ENCODE measurements at regions of chr12 and their contacts with region 1.

Region 1: DNA sequence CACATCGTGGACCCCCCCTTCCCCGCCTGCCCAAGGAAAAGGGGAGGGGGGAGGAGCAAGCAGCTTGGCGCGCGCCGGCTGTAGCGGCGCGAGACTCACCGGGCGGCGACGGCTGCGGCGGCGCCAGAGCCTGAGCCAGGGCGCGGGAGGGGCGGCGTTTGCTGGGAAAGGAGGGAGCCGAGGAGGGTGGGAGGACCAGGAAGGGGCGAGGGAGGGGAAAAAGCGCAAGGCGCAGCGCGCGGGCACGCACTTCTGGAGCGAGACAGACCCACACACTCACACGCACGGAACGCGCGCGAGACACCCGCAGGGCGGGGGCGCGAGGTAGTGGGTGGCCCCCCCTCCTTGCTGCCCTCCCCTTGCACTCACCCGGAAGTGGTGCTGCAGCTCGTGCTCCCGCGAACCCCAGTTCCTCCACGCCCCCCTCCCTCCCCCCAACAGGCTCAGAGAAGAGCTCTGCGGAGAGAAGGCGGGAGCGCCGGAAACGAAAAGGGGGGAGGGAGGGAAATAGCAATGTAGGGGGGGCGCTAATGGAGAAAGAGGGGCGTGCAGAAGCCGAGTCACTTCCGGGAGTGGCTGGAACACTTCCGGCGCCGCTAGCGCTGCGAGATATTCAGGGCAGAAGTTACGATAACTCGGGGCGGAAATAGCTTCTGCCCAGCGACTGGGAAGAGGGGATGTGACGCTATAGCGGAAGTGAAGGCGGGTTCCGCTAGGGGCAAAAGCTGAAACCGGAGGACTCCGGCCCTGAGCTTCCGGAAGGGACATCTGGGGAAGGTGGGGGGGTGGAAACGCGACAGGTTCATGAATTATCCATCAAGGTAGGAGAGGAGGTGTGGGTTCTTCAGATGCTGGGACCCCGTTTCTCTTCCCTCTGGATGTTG is at the start of gene ZNF384:
- DNase-seq: peak; percentile 97
- ATAC-seq: peak; percentile 83
- H3K4me3 ChIP-seq: peak within 1 kb of the TSS; percentile 80
- H3K27ac ChIP-seq: peak within 1 kb of the TSS; percentile 97
- H3K4me1 ChIP-seq: peaks cover 10% of the 10 kb centered on the region; the same call in 1 of the 2 replicates
- H3K27me3 ChIP-seq: no peaks in the 10 kb centered on the region
- CTCF ChIP-seq: 0 out of 6 replicates have a peak, but pooled peaks of 1 of the 3 experiments have one; percentile 0
- EP300 ChIP-seq: peak in 1 of 2 experiments; percentile 17; a peak in 1 of 4 replicates
- POLR2A ChIP-seq: peak; percentile 88
- RAD21 ChIP-seq: no peak
- polyA plus RNA-seq, gene ZNF384: 0.46 to 1.3 TPM

Region 2: DNA sequence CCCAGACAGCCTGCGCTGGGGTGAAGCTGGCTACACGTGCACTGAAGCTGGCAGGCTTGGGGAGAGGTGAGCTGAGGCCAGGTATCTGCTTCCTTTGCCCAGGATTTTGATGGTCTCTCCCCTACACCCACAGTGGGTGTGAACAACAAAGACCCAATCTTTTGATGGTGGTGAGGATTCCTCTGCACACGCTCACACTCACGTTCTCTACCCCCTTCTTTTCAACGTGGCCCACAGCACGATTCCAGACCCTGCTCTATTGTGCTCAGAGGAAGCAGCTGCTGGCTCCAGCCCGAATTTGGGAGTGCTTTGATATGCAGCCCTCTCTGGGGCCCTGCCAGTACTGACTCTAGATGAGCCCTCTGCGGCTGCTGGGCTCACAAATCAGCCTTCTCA is 484.1 kb before region 1 on chr12:
- CTCF ChIA-PET with region 1: no interaction called
- POLR2A ChIA-PET with region 1: no interaction called
- RAD21 ChIA-PET with region 1: no interaction called
- SMC1A ChIA-PET with region 1: no interaction called
- in situ Hi-C with region 1: no loop called
- intact Hi-C with region 1: no loop called
- DNase-seq: no peak
- ATAC-seq: no peak
- H3K4me3 ChIP-seq: no peak overlapping the region
- H3K27ac ChIP-seq: no peak overlapping the region
- H3K4me1 ChIP-seq: no peaks in the 10 kb centered on the region
- H3K27me3 ChIP-seq: peaks cover 2 to 14% of the 10 kb centered on the region in 2 experiments; a peak in 3 of 4 replicates
- CTCF ChIP-seq: no peak
- EP300 ChIP-seq: no peak
- POLR2A ChIP-seq: no peak
- RAD21 ChIP-seq: no peak

Region 3: DNA sequence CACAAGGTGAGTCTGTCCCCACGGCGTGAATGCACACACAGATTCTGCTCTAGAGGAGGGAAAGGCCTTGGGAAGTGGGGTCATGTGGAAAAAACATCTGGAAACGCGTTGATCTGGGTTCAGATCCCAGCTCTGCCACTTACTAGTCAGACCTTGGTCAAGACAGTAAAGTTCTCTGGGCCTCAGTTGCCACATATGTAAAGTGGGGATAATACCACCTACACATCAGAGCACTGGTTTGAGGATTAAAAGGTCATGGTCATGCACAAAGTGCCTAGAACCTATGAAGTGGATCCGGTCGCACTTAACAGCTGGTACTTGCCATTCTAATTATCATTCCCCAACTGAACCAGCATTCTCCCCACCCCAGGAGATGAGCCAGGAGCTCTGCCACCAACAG is 374.1 kb before region 1 on chr12:
- CTCF ChIA-PET with region 1: no interaction called
- POLR2A ChIA-PET with region 1: no interaction called
- RAD21 ChIA-PET with region 1: no interaction called
- SMC1A ChIA-PET with region 1: no interaction called
- in situ Hi-C with region 1: no loop called
- intact Hi-C with region 1: no loop called
- DNase-seq: no peak
- ATAC-seq: no peak
- H3K4me3 ChIP-seq: no peak overlapping the region
- H3K27ac ChIP-seq: no peak overlapping the region
- H3K4me1 ChIP-seq: peaks cover 33% of the 10 kb centered on the region
- H3K27me3 ChIP-seq: no peaks in the 10 kb centered on the region
- CTCF ChIP-seq: no peak
- EP300 ChIP-seq: no peak
- POLR2A ChIP-seq: no peak
- RAD21 ChIP-seq: no peak

Region 4: DNA sequence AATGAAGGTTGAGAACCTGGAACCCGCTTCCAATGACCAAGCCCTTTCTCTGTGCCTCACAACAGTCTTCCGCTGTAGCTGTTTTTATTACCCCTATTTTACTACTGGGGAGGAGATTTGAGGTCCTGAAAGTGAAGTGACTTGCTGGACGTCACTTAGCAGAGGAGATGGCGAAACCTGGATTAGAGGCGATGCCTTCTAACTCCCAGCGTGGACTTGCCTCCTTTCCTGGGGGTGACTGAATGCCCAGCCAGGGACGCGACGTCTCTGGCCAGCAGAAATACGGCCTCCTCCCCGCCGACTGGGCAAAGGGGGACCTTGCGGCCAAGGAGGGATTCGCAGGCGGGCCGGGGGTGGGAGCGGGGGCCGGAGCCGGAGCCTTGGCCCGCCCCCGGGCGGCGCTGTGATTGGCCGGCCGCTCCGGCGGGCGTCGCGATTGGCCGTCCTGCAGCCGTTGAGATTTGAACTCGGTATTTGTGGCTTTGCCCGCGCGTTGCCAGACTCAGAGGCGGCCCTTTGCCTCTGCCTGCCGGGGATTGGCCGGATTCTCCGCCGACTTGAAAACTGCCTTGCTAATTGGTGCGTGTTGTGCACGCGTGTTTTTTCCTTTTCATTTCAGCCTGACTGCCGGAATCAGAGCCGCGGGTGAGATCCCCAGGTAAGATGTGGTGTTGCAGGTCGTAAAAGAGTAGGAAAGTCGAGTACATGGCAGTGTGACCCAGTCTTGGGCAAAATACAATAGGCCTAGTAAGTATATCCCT is 195.6 kb before region 1 on chr12 and contains the start of gene NCAPD2:
- CTCF ChIA-PET with region 1: no interaction called
- POLR2A ChIA-PET with region 1: interaction called, 10 read pairs
- RAD21 ChIA-PET with region 1: no interaction called
- SMC1A ChIA-PET with region 1: interaction called, 3 read pairs
- in situ Hi-C with region 1: no loop called
- intact Hi-C with region 1: no loop called
- DNase-seq: peak; percentile 88
- ATAC-seq: peak; percentile 94
- H3K4me3 ChIP-seq: peak within 1 kb of the TSS; percentile 93
- H3K27ac ChIP-seq: peak within 1 kb of the TSS; percentile 97
- H3K4me1 ChIP-seq: peaks cover 6% of the 10 kb centered on the region; the same call in 1 of the 2 replicates
- H3K27me3 ChIP-seq: no peaks in the 10 kb centered on the region
- CTCF ChIP-seq: peak in 2 of 3 experiments; percentile 2 to 25; a peak in 1 of 6 replicates
- EP300 ChIP-seq: no peak
- POLR2A ChIP-seq: peak; percentile 81
- RAD21 ChIP-seq: no peak
- polyA plus RNA-seq, gene NCAPD2: 24.2 to 32.8 TPM

Region 5: GRCh38 chr12:6570264-6570887 is 118.9 kb before region 1 on chr12:
- CTCF ChIA-PET with region 1: interaction called, 14 read pairs
- POLR2A ChIA-PET with region 1: interaction called, 5 read pairs
- RAD21 ChIA-PET with region 1: interaction called, 4 read pairs
- SMC1A ChIA-PET with region 1: interaction called, 5 read pairs
- in situ Hi-C with region 1: no loop called
- intact Hi-C with region 1: loop called (anchors 5 kb)
- DNase-seq: no peak
- ATAC-seq: peak; percentile 54
- H3K4me3 ChIP-seq: no peak overlapping the region
- H3K27ac ChIP-seq: no peak overlapping the region
- H3K4me1 ChIP-seq: peaks cover 4% of the 10 kb centered on the region; the same call in 1 of the 2 replicates
- H3K27me3 ChIP-seq: no peaks in the 10 kb centered on the region
- CTCF ChIP-seq: peak; percentile 62 to 75 (median 64)
- EP300 ChIP-seq: no peak
- POLR2A ChIP-seq: 0 out of 2 replicates have a peak, but pooled peaks have one; percentile 37
- RAD21 ChIP-seq: peak; percentile 21; the same call in 1 of the 2 replicates

Region 6: GRCh38 chr12:6620137-6620884 is 68.9 kb before region 1 on chr12:
- CTCF ChIA-PET with region 1: interaction called, 18 read pairs
- POLR2A ChIA-PET with region 1: interaction called, 3 read pairs
- RAD21 ChIA-PET with region 1: interaction called, 7 read pairs
- SMC1A ChIA-PET with region 1: interaction called, 13 read pairs
- in situ Hi-C with region 1: loop called (anchors 5 kb)
- intact Hi-C with region 1: loop called (anchors 1 kb)
- DNase-seq: no peak
- ATAC-seq: no peak
- H3K4me3 ChIP-seq: no peak overlapping the region
- H3K27ac ChIP-seq: no peak overlapping the region
- H3K4me1 ChIP-seq: no peaks in the 10 kb centered on the region
- H3K27me3 ChIP-seq: no peaks in the 10 kb centered on the region
- CTCF ChIP-seq: no peak
- EP300 ChIP-seq: no peak
- POLR2A ChIP-seq: peak; percentile 38; the same call in 1 of the 2 replicates
- RAD21 ChIP-seq: no peak

Region 7: GRCh38 chr12:6662906-6663742 is 26.1 kb before region 1 on chr12 and contains the start of gene ING4:
- CTCF ChIA-PET with region 1: interaction called, 24 read pairs
- POLR2A ChIA-PET with region 1: interaction called, 12 read pairs
- RAD21 ChIA-PET with region 1: interaction called, 7 read pairs
- SMC1A ChIA-PET with region 1: interaction called, 9 read pairs
- in situ Hi-C with region 1: no loop called
- intact Hi-C with region 1: loop called (anchors 1 kb)
- DNase-seq: peak; percentile 96
- ATAC-seq: peak; percentile 100
- H3K4me3 ChIP-seq: peak within 1 kb of the TSS; percentile 96
- H3K27ac ChIP-seq: peak within 1 kb of the TSS; percentile 80
- H3K4me1 ChIP-seq: no peaks in the 10 kb centered on the region; the same call in 1 of the 2 replicates
- H3K27me3 ChIP-seq: no peaks in the 10 kb centered on the region
- CTCF ChIP-seq: no peak
- EP300 ChIP-seq: peak in 1 of 2 experiments; percentile 50; a peak in 1 of 4 replicates
- POLR2A ChIP-seq: peak; percentile 68
- RAD21 ChIP-seq: no peak
- polyA plus RNA-seq, gene ING4: 7.2 to 8.9 TPM

Region 8: GRCh38 chr12:6745741-6746525 is 56.7 kb after region 1 on chr12:
- CTCF ChIA-PET with region 1: no interaction called
- POLR2A ChIA-PET with region 1: no interaction called
- RAD21 ChIA-PET with region 1: no interaction called
- SMC1A ChIA-PET with region 1: no interaction called
- in situ Hi-C with region 1: no loop called
- intact Hi-C with region 1: no loop called
- DNase-seq: no peak
- ATAC-seq: peak; percentile 82
- H3K4me3 ChIP-seq: no peak overlapping the region
- H3K27ac ChIP-seq: peak overlapping the region; percentile 76
- H3K4me1 ChIP-seq: peaks cover 13% of the 10 kb centered on the region
- H3K27me3 ChIP-seq: no peaks in the 10 kb centered on the region
- CTCF ChIP-seq: no peak
- EP300 ChIP-seq: no peak
- POLR2A ChIP-seq: no peak
- RAD21 ChIP-seq: no peak

Region 9: DNA sequence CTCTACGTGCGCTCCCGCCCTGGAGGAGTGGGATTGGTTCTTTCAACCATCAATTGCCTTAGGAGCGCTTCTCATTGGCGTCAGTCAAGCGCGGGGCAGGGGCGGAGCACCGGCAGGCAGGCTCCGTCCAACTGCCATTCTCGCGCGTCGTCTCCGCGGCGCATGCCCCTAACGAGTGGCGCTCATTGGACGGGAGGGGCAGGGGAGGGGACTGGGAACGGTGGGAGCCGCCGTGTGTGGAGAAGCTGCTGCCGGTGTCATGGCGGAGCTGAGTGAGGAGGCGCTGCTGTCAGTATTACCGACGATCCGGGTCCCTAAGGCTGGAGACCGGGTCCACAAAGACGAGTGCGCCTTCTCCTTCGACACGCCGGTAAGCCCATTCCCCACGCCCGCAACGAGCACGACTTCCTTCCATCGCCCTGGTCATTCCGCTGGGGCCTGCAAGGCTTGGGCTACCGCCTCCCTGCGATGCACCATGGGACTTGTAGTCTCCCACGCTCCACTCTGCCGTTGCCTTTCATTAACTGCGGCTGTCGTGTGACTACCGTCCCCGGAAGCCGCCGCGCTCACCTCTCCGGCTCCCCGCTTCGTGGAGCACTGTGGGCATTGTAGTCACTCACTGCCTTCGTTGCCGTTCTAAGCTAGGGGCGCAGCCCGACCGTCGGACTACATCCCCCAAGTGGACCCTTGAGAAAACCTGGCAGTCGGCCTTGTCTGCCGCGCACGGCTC is 162.8 kb after region 1 on chr12 and contains the start of gene USP5:
- CTCF ChIA-PET with region 1: no interaction called
- POLR2A ChIA-PET with region 1: interaction called, 7 read pairs
- RAD21 ChIA-PET with region 1: interaction called, 3 read pairs
- SMC1A ChIA-PET with region 1: interaction called, 4 read pairs
- in situ Hi-C with region 1: no loop called
- intact Hi-C with region 1: loop called (anchors 5 kb)
- DNase-seq: peak; percentile 99
- ATAC-seq: peak; percentile 87
- H3K4me3 ChIP-seq: peak within 1 kb of the TSS; percentile 82
- H3K27ac ChIP-seq: peak within 1 kb of the TSS; percentile 84
- H3K4me1 ChIP-seq: peaks cover 28% of the 10 kb centered on the region
- H3K27me3 ChIP-seq: no peaks in the 10 kb centered on the region
- CTCF ChIP-seq: no peak
- EP300 ChIP-seq: no peak
- POLR2A ChIP-seq: peak; percentile 89
- RAD21 ChIP-seq: no peak
- polyA plus RNA-seq, gene USP5: 2.5 to 5.2 TPM